A673 (cell line): ENCODE measurements at regions of chr20 and their contacts with region 1.

Region 1: GRCh38 chr20:23970049-23970448 is 18.5 kb downstream of the GGTLC1 start:
- DNase-seq: no peak
- H3K4me3 ChIP-seq: no peak overlapping the region
- H3K27ac ChIP-seq: no peak overlapping the region
- H3K4me1 ChIP-seq: no peaks in the 10 kb centered on the region
- H3K27me3 ChIP-seq: peaks cover 25% of the 10 kb centered on the region
- CTCF ChIP-seq: no peak

Region 2: GRCh38 chr20:23782366-23782985 is 187.6 kb before region 1 on chr20:
- CTCF ChIA-PET with region 1: no interaction called
- POLR2A ChIA-PET with region 1: no interaction called
- intact Hi-C with region 1: loop called (anchors 10 kb)
- DNase-seq: peak; percentile 7
- H3K4me3 ChIP-seq: no peak overlapping the region
- H3K27ac ChIP-seq: no peak overlapping the region
- H3K4me1 ChIP-seq: no peaks in the 10 kb centered on the region
- H3K27me3 ChIP-seq: no peaks in the 10 kb centered on the region
- CTCF ChIP-seq: peak; percentile 58

Region 3: DNA sequence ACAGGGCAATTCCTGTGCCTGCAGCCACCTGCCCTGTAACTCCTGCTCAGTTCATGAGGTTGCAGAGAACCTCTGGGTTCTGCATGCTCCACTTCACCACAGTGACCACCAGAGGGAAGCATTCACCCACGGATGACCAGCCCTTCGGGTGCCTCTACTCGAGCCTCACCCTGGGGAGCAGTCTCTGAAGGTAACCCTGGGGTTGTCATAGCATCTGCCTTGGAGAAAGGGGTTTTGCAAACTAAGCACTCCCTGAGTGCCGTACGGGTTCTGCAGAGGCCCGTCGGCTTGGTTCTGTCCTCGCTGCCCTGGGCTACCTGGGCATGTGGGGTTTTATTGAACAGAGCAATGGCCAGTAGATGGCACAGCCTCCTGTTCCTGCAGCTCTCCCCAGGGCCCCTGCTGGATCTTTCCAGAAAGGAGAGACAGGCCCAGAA is 80.3 kb before region 1 on chr20:
- CTCF ChIA-PET with region 1: no interaction called
- POLR2A ChIA-PET with region 1: no interaction called
- intact Hi-C with region 1: loop called (anchors 5 kb)
- DNase-seq: peak; percentile 73
- H3K4me3 ChIP-seq: no peak overlapping the region
- H3K27ac ChIP-seq: no peak overlapping the region
- H3K4me1 ChIP-seq: no peaks in the 10 kb centered on the region
- H3K27me3 ChIP-seq: peaks cover 3% of the 10 kb centered on the region
- CTCF ChIP-seq: peak; percentile 82

Region 4: DNA sequence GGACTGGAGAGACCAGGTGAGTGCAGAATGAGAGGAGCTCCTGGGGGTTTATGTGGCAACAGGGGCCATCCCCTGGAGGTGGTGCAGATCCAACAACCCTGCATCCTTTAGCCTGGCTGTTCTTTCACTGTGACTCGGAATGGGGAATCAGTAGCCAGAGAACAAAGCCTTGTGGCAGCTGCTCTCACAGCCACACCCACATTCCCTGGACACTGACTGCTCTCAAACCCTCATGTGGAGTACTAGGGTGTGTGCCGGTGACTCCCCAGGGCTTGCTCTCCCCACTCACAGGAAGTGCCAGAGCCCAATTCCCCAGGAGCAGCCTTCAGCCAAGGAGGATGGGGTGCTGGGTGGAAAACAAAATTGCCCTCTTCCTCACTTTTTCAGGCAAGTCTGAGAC is 48.7 kb after region 1 on chr20:
- CTCF ChIA-PET with region 1: no interaction called
- POLR2A ChIA-PET with region 1: no interaction called
- intact Hi-C with region 1: no loop called
- DNase-seq: no peak
- H3K4me3 ChIP-seq: no peak overlapping the region
- H3K27ac ChIP-seq: no peak overlapping the region
- H3K4me1 ChIP-seq: no peaks in the 10 kb centered on the region
- H3K27me3 ChIP-seq: peaks cover 4% of the 10 kb centered on the region
- CTCF ChIP-seq: no peak